Activated CD8-positive, alpha-beta T cell treated with anti-CD3 and anti-CD28 coated beads, Interleukin-2, amount 10 ng/mL, durations not matched to agents 7 days and 5 days (primary cell): ENCODE measurements at regions of chr3 and their contacts with region 1.

Region 1: GRCh38 chr3:39000008-39000450 is 51.7 kb downstream of the SCN11A start:
- DNase-seq: no peak
- ATAC-seq: peak; percentile 81
- H3K4me3 Mint-ChIP-seq: no peak overlapping the region
- H3K27ac Mint-ChIP-seq: no peak overlapping the region
- H3K4me1 Mint-ChIP-seq: no peaks in the 10 kb centered on the region
- H3K27me3 Mint-ChIP-seq: peaks cover 11% of the 10 kb centered on the region

Region 2: DNA sequence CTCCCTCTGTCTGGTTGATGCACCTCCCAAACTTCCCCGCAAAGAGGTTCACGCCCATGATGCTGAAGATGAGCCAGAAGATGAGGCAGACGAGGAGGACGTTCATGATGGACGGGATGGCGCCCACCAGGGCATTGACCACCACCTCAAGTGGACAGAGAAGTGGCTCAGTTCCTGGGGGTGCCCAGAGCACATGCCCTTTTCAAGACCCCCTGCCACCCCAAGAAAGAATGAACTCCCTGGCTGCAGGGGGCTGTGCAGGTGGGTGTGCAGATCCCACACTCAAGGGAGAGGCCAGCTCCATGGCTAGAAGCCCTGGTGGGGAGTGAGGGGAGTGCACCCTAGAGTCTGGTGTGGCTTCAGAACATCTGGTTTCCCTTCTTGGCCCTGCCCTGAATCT is 439.7 kb before region 1 on chr3:
- CTCF ChIA-PET with region 1: no interaction called
- POLR2A ChIA-PET with region 1: no interaction called
- DNase-seq: no peak
- ATAC-seq: no peak
- H3K4me3 Mint-ChIP-seq: no peak overlapping the region
- H3K27ac Mint-ChIP-seq: no peak overlapping the region
- H3K4me1 Mint-ChIP-seq: no peaks in the 10 kb centered on the region
- H3K27me3 Mint-ChIP-seq: peaks cover 4% of the 10 kb centered on the region

Region 3: DNA sequence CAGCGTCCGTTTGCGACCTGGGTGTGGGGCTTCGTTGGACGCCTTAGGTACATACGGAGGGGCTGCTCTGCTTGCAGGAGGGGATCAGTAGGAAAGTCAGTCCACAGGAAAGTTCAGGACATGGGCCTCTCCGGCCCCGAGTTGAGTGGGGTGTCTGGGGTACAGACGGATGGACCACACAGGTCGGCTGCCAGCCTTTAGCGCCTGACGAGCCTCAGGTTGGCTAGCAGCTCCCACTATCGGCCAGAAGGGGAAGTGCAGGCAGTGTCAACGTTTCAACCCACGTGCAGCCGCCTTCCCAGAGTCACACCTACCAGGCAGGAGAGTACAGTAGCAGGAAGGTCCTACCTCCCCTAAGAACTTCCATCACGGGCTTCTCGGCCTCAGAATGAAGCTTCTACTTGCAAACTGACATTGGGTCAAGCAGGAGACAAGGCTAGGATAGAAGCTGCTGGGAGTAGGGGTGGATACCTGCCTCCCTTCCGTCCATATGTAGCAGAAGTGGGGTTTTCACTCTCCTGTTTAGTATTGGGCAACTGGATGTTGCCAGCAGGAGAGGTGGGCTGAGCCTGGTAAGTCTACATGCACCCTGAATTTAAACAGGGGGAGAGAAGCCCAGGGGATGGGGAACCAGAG is 348.8 kb before region 1 on chr3:
- CTCF ChIA-PET with region 1: interaction called, 12 read pairs
- POLR2A ChIA-PET with region 1: no interaction called
- DNase-seq: peak; percentile 80
- ATAC-seq: peak; percentile 57
- H3K4me3 Mint-ChIP-seq: no peak overlapping the region
- H3K27ac Mint-ChIP-seq: no peak overlapping the region
- H3K4me1 Mint-ChIP-seq: peaks cover 4% of the 10 kb centered on the region
- H3K27me3 Mint-ChIP-seq: peaks cover 17% of the 10 kb centered on the region

Region 4: DNA sequence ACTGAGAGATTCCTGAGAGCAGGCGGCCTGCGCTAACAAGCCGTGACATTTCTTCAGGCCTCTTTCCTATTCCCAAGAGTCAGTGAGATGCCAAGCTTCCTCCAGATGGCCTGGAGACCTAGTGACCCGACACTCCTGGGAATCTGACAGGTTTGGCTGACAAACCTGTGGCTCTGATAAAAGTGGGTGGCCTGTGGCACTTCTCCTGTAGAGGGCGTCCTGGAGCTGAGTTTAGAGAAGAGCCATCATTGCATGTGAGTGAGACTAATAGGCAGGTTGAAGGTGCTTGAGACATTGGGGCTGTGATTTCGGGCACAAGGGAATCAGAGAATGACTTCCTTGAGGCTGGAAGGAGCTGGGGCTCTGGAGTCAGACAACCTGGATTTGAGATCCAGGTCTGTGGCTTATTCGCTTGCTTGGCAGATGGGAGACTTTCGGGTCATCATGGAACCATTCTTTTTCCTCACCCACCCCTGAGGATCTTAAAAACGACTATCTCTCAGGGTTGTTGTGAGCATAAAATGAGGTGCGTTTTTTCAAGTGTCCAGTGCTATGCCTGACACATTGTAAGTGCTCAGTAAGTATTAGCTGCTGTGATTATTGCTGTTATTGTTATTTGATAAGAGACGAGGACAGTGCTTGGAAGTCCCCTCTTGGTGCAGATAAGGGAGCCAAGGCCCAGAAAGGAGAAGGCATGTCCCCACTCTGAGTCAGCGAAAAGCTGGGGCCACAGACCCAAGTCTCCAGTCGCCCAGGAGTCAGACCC is 261.2 kb before region 1 on chr3:
- CTCF ChIA-PET with region 1: interaction called, 22 read pairs
- POLR2A ChIA-PET with region 1: no interaction called
- DNase-seq: peak; percentile 47
- ATAC-seq: no peak
- H3K4me3 Mint-ChIP-seq: no peak overlapping the region
- H3K27ac Mint-ChIP-seq: no peak overlapping the region
- H3K4me1 Mint-ChIP-seq: no peaks in the 10 kb centered on the region
- H3K27me3 Mint-ChIP-seq: peaks cover 16% of the 10 kb centered on the region

Region 5: DNA sequence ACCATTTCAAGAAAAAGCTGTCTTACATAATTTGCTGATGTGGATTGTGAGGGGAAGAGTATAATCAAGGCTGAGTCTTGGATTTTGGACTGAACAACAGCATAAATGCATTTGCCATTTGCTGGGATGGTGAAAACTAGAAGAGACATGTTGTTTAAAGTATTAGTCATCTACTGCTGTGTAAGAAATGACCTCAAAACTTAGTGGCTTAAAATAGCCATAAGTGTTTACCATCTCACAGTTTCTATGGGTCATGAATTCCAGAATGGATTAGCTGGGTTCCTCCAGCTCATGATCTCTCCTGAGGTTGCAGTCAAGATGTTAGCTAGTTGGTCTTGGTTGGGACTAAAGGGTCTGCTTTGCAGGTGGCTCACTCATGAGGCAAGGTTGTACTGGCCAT is 14.4 kb before region 1 on chr3:
- CTCF ChIA-PET with region 1: interaction called, 22 read pairs
- POLR2A ChIA-PET with region 1: no interaction called
- DNase-seq: no peak
- ATAC-seq: no peak
- H3K4me3 Mint-ChIP-seq: no peak overlapping the region
- H3K27ac Mint-ChIP-seq: no peak overlapping the region
- H3K4me1 Mint-ChIP-seq: no peaks in the 10 kb centered on the region
- H3K27me3 Mint-ChIP-seq: peaks cover 11% of the 10 kb centered on the region

Region 6: DNA sequence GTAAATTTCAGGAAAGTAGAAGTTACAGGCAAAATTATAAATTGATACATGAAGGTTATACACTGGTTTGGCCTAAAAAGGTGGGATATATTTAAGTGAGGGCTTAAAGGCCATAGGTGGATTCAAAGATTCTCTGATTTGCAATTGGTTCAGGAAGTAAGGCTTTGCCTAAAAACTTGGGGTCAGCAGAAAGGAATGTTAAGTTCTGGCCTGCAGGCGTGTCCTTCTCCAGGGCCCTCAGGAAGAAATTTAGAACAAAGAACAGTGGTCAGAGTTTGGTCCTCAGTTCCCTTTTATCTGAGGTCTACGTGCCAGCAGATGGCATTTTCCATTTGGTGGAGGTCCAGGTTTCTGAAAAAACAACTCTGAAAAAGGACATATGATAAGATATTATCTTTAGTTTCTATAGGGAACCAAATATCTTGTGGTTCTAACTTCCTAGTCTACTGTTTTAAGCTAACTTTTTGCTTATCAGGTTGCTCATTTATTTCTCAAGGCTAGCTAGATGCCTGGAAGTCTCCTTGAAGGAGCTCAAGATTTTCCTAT is 11.2 kb after region 1 on chr3:
- CTCF ChIA-PET with region 1: interaction called, 20 read pairs
- POLR2A ChIA-PET with region 1: no interaction called
- DNase-seq: no peak
- ATAC-seq: no peak
- H3K4me3 Mint-ChIP-seq: no peak overlapping the region
- H3K27ac Mint-ChIP-seq: no peak overlapping the region
- H3K4me1 Mint-ChIP-seq: no peaks in the 10 kb centered on the region
- H3K27me3 Mint-ChIP-seq: peaks cover 8% of the 10 kb centered on the region

Region 7: GRCh38 chr3:39028546-39028945 is 28.5 kb after region 1 on chr3:
- CTCF ChIA-PET with region 1: interaction called, 25 read pairs
- POLR2A ChIA-PET with region 1: no interaction called
- DNase-seq: no peak
- ATAC-seq: no peak
- H3K4me3 Mint-ChIP-seq: no peak overlapping the region
- H3K27ac Mint-ChIP-seq: no peak overlapping the region
- H3K4me1 Mint-ChIP-seq: no peaks in the 10 kb centered on the region
- H3K27me3 Mint-ChIP-seq: peaks cover 17% of the 10 kb centered on the region

Region 8: GRCh38 chr3:39079530-39079929 is 79.5 kb after region 1 on chr3:
- CTCF ChIA-PET with region 1: no interaction called
- POLR2A ChIA-PET with region 1: no interaction called
- DNase-seq: no peak
- ATAC-seq: no peak
- H3K4me3 Mint-ChIP-seq: no peak overlapping the region
- H3K27ac Mint-ChIP-seq: no peak overlapping the region
- H3K4me1 Mint-ChIP-seq: peaks cover 4% of the 10 kb centered on the region
- H3K27me3 Mint-ChIP-seq: no peaks in the 10 kb centered on the region